CD8-positive, alpha-beta T cell (primary cell): ENCODE measurements at regions of chr19 and their contacts with region 1.

Region 1: GRCh38 chr19:35648017-35648961 is at the start of gene COX6B1:
- DNase-seq: peak; percentile 83 to 98 (median 90)
- ATAC-seq: peak; percentile 72
- H3K4me3 ChIP-seq: peak within 1 kb of the TSS; percentile 70 to 82
- H3K4me3 Mint-ChIP-seq: peak within 1 kb of the TSS; percentile 99
- H3K27ac ChIP-seq: peak within 1 kb of the TSS; percentile 66 to 80
- H3K27ac Mint-ChIP-seq: peak within 1 kb of the TSS; percentile 97
- H3K4me1 ChIP-seq: peaks cover 32% of the 10 kb centered on the region
- H3K4me1 Mint-ChIP-seq: peaks cover 52% of the 10 kb centered on the region
- H3K27me3 ChIP-seq: no peaks in the 10 kb centered on the region
- H3K27me3 Mint-ChIP-seq: no peaks in the 10 kb centered on the region
- CTCF ChIP-seq: no peak
- total RNA-seq, gene COX6B1: 152 to 171 TPM

Region 2: DNA sequence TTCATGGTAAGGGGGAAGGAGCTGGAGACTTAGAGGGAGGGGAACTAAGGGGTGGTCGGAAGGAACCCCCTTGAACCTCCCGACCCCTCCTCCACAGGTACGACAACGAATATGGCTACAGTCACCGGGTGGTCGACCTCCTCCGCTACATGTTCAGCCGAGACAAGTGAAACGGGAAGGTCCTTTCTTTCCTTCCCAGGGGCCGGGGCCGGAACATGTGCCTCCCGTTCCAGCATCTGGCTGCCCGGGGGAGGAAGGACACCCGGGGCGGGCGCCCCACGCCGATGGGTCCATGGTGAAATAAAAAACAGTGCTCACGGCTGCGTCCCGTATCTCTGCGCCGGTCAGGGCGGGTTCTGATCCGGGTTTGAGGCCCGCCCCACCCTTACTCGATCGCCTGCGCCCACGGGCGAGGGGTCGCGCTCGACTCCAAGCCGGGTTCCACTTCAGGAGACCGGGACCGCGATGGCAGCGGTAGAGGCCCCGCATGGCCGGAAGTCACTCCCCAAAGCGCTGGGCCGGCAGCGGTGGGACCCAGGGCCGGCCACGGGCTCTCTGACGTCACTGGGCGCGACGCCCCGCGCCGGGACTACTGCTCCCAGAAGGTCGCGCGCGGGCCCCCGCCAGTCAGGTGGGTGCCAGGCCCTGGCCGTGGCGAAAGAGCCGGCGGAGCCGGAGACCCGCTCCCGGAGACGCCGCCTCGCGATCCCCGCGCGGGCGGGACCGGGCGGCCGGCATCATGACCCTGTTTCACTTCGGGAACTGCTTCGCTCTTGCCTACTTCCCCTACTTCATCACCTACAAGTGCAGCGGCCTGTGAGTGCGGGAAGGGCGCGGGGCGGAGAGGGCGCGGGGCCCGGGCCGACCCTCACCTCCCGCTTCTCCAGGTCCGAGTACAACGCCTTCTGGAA is 103.0 kb before region 1 on chr19 and contains the start of gene TMEM147:
- CTCF ChIA-PET with region 1: no interaction called
- POLR2A ChIA-PET with region 1: no interaction called
- intact Hi-C with region 1: loop called in 1 of 2 experiments (anchors 1 kb)
- DNase-seq: peak; percentile 44 to 88 (median 79)
- ATAC-seq: peak; percentile 75
- H3K4me3 ChIP-seq: peak within 1 kb of the TSS; percentile 75 to 81
- H3K4me3 Mint-ChIP-seq: peak within 1 kb of the TSS; percentile 88
- H3K27ac ChIP-seq: peak within 1 kb of the TSS; percentile 79 to 85
- H3K27ac Mint-ChIP-seq: peak within 1 kb of the TSS; percentile 90
- H3K4me1 ChIP-seq: peaks cover 21% of the 10 kb centered on the region
- H3K4me1 Mint-ChIP-seq: peaks cover 35% of the 10 kb centered on the region
- H3K27me3 ChIP-seq: no peaks in the 10 kb centered on the region
- H3K27me3 Mint-ChIP-seq: no peaks in the 10 kb centered on the region
- CTCF ChIP-seq: no peak
- total RNA-seq, gene TMEM147: 22.3 to 27.2 TPM

Region 3: DNA sequence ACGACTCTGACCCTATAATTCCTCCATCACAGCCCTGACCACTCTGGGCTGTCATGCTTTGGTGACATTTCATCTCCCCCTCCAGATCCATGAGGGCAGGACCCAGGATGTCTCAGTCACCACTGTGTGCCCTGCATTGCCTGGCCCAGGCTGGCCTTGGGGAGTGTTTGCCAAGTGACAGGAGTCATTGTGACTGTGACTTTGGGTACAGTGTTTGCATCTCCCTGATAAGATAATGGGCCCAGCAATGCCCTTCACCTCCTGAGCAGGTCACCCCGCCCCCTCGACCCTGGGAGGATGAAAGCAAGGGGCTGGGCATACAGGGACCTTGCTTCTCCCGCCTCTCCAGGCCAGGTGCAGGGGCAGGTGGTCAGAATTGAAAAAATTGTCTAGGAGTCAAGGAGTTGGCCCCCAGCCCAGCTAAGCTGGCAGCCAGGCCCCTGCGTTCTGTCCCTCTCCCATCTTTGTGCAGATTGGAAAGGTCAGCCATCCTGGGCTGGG is 79.0 kb before region 1 on chr19:
- CTCF ChIA-PET with region 1: no interaction called
- POLR2A ChIA-PET with region 1: no interaction called
- intact Hi-C with region 1: no loop called
- DNase-seq: no peak
- ATAC-seq: no peak
- H3K4me3 ChIP-seq: no peak overlapping the region
- H3K4me3 Mint-ChIP-seq: no peak overlapping the region
- H3K27ac ChIP-seq: no peak overlapping the region
- H3K27ac Mint-ChIP-seq: no peak overlapping the region
- H3K4me1 ChIP-seq: no peaks in the 10 kb centered on the region
- H3K4me1 Mint-ChIP-seq: no peaks in the 10 kb centered on the region
- H3K27me3 ChIP-seq: no peaks in the 10 kb centered on the region
- H3K27me3 Mint-ChIP-seq: peaks cover 35% of the 10 kb centered on the region
- CTCF ChIP-seq: no peak

Region 4: DNA sequence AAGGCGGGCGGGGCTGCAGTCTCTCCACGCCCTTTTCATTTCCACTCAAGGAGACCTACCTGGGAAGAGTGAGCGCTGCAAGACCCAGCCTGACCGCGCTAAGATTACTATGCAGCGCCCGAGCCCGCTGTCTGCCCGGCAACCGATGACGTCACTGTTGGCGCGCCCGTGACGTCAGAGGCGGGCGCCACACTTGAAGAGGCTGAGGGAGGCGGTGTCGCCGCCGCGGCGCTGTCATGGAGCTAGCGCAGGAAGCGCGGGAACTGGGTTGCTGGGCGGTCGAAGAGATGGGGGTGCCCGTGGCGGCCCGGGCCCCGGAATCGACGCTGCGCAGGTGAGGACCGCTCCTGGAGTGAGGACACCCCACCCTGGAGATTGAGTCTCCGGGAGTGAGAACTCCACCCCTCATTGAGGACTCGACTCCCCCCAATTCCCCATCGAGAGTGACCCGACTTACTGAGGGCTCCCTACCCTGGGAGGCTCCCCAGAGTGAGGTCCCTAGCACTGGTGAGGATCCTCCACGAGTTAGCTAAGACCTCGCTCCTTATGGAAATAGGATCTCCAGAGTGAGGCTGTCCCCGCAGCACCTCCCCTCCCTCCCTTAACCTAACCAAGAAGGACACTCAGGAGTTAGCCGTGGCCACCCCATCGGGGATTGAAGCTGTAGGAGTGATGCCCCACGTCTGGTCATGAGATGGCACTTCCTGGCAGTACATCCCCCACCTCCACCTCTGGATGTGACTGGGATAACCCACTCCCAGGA is 35.5 kb before region 1 on chr19 and contains the start of gene HAUS5:
- CTCF ChIA-PET with region 1: no interaction called
- POLR2A ChIA-PET with region 1: interaction called, 7 read pairs
- intact Hi-C with region 1: loop called (anchors 1 kb)
- DNase-seq: peak; percentile 90 to 99 (median 96)
- ATAC-seq: peak; percentile 91
- H3K4me3 ChIP-seq: peak within 1 kb of the TSS; percentile 87 to 91
- H3K4me3 Mint-ChIP-seq: peak within 1 kb of the TSS; percentile 86
- H3K27ac ChIP-seq: peak within 1 kb of the TSS; percentile 78 to 81
- H3K27ac Mint-ChIP-seq: peak within 1 kb of the TSS; percentile 94
- H3K4me1 ChIP-seq: peaks cover 26% of the 10 kb centered on the region
- H3K4me1 Mint-ChIP-seq: peaks cover 35% of the 10 kb centered on the region
- H3K27me3 ChIP-seq: no peaks in the 10 kb centered on the region
- H3K27me3 Mint-ChIP-seq: no peaks in the 10 kb centered on the region
- CTCF ChIP-seq: no peak
- total RNA-seq, gene HAUS5: 24.0 to 27.7 TPM

Region 5: GRCh38 chr19:35628565-35629331 is 19.5 kb before region 1 on chr19 and contains the start of gene RBM42:
- CTCF ChIA-PET with region 1: no interaction called
- POLR2A ChIA-PET with region 1: interaction called, 8 read pairs
- intact Hi-C with region 1: loop called (anchors 1 kb)
- DNase-seq: peak; percentile 94 to 99 (median 98)
- ATAC-seq: peak; percentile 99
- H3K4me3 ChIP-seq: peak within 1 kb of the TSS; percentile 90 to 93
- H3K4me3 Mint-ChIP-seq: peak within 1 kb of the TSS; percentile 96
- H3K27ac ChIP-seq: peak within 1 kb of the TSS; percentile 90 to 91
- H3K27ac Mint-ChIP-seq: peak within 1 kb of the TSS; percentile 96
- H3K4me1 ChIP-seq: peaks cover 17% of the 10 kb centered on the region
- H3K4me1 Mint-ChIP-seq: peaks cover 24% of the 10 kb centered on the region
- H3K27me3 ChIP-seq: no peaks in the 10 kb centered on the region
- H3K27me3 Mint-ChIP-seq: no peaks in the 10 kb centered on the region
- CTCF ChIP-seq: no peak
- total RNA-seq, gene RBM42: 49.9 to 51.3 TPM

Region 6: DNA sequence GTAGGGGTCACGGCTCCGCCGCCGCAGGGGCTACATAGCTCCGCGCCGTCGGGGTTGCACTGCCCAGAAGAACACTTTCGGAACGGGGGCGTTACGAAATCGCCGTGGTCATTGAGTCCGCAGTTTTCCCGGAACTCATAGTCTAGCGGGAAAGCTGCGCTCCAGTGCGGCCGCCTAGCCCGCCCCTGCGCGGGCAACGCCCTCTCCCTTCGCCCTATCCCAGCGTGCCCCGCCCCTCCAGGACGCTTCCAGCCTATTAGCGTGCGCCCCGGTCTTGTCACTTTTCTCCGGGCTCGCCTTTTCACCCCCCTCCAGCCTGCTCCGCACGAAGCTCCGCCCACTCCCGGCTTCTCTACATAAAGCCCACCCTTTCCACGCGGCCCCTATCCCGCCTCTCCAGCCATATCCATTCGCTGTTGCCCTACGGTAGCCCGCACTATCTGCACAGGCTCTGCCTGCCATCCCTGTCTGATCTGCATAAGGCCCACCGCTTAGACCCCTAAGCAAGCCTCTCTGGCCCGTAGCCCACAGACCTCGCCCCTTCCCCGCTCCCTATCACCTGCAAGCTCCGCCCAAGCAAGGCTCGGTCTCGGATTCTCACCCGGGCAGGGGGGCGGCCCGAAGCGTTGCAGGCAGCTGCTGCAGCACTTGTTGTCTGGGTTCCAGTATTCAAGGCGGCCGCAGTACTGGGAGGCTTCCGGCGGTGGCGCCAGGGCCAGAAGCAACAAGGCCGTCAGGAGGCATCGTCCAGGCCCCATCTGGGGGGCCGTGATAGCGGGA is 92.3 kb after region 1 on chr19:
- CTCF ChIA-PET with region 1: no interaction called
- POLR2A ChIA-PET with region 1: interaction called, 3 read pairs
- intact Hi-C with region 1: loop called (anchors 1 to 5 kb)
- DNase-seq: peak; percentile 87 to 97 (median 95)
- ATAC-seq: peak; percentile 65
- H3K4me3 ChIP-seq: peak overlapping the region; percentile 60 to 63
- H3K4me3 Mint-ChIP-seq: peak overlapping the region; percentile 87
- H3K27ac ChIP-seq: peak overlapping the region; percentile 50 to 58
- H3K27ac Mint-ChIP-seq: peak overlapping the region; percentile 83
- H3K4me1 ChIP-seq: peaks cover 51% of the 10 kb centered on the region
- H3K4me1 Mint-ChIP-seq: peaks cover 53% of the 10 kb centered on the region
- H3K27me3 ChIP-seq: no peaks in the 10 kb centered on the region
- H3K27me3 Mint-ChIP-seq: no peaks in the 10 kb centered on the region
- CTCF ChIP-seq: no peak

Region 7: GRCh38 chr19:35899547-35900214 is 251.4 kb after region 1 on chr19:
- CTCF ChIA-PET with region 1: no interaction called
- POLR2A ChIA-PET with region 1: interaction called, 4 read pairs
- intact Hi-C with region 1: loop called (anchors 2 kb)
- DNase-seq: peak; percentile 68 to 97 (median 87)
- ATAC-seq: peak; percentile 59
- H3K4me3 ChIP-seq: peak overlapping the region; percentile 95 to 97
- H3K4me3 Mint-ChIP-seq: peak overlapping the region; percentile 100
- H3K27ac ChIP-seq: peak overlapping the region; percentile 85 to 99
- H3K27ac Mint-ChIP-seq: peak overlapping the region; percentile 95
- H3K4me1 ChIP-seq: peaks cover 45% of the 10 kb centered on the region
- H3K4me1 Mint-ChIP-seq: peaks cover 57% of the 10 kb centered on the region
- H3K27me3 ChIP-seq: no peaks in the 10 kb centered on the region
- H3K27me3 Mint-ChIP-seq: no peaks in the 10 kb centered on the region
- CTCF ChIP-seq: no peak

Region 8: DNA sequence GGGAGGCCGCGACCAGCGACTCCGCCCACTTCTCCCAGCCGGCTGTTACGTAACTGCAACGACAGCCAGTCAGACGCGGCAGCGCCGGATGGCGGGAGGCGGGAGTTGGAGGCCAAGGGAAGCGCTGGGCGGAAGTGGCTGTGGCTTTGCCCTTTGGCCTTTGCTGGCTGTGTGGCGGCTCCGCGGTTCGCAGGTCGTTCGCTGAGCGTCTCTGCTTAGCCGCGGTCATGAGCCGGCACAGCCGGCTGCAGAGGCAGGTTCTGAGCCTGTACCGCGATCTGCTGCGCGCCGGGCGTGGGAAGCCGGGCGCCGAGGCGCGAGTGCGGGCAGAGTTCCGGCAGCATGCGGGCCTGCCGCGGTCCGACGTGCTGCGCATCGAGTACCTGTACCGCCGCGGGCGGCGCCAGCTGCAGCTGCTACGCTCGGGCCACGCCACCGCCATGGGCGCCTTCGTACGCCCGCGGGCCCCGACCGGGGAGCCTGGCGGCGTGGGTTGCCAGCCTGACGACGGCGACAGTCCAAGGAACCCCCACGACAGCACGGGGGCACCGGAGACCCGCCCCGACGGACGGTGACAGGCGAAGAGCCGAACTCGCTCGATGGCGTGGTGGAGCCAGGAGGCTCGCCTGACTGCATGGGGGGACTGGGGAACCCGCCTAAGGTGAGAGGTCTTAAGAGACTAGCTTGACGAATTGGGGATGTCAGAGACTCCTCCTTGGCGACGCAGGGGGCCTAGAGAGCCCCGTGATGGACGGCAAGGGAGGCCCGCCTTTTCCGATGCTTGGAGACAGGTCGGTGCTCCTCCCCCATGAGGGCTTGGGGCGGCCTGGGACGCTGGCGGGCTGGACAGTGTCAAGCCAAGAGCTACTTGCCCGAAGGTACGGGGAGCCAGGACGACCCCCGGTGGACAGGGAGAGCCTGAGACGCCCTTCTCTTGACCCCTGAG is 347.0 kb after region 1 on chr19 and contains the start of gene SDHAF1:
- CTCF ChIA-PET with region 1: no interaction called
- POLR2A ChIA-PET with region 1: no interaction called
- intact Hi-C with region 1: loop called in 1 of 2 experiments (anchors 5 kb)
- DNase-seq: peak; percentile 80 to 96 (median 92)
- ATAC-seq: peak; percentile 88
- H3K4me3 ChIP-seq: peak within 1 kb of the TSS; percentile 73 to 95
- H3K4me3 Mint-ChIP-seq: peak within 1 kb of the TSS; percentile 93
- H3K27ac ChIP-seq: peak within 1 kb of the TSS; percentile 55 to 69
- H3K27ac Mint-ChIP-seq: peak within 1 kb of the TSS; percentile 94
- H3K4me1 ChIP-seq: peaks cover 22% of the 10 kb centered on the region
- H3K4me1 Mint-ChIP-seq: peaks cover 35% of the 10 kb centered on the region
- H3K27me3 ChIP-seq: peaks cover 0 to 4% of the 10 kb centered on the region in 2 experiments
- H3K27me3 Mint-ChIP-seq: no peaks in the 10 kb centered on the region
- CTCF ChIP-seq: no peak
- total RNA-seq, gene SDHAF1: 7.3 TPM